ENCODE measurements at regions of chr3 and their contacts with region 1.

Region 1: DNA sequence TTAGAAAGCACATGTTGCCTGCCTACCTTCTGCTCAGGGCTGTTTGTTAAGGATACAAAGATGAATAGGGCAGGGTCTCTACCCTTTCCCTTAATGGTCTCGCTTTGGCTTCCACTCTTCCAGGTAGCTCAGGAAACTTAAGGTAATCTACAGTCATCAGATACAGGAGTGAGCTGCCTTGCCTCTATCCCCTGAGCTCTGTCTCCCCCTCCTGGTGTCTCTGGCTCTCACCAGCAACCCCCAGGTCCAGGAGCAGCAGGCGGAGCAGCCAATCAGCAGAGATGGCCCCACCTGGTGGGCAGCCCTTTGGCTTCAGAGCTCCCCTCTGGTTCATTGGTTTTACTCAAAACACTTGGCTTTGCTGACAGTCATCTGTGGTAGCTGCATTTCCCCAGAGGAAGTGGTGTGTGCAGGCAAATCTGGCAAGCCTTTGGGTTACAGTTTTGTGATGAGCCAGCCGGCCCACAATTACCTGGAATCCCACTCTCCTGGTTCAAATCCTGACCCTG is 8.5 kb upstream of the CX3CR1 start:
- DNase-seq: peak; percentile 88

Region 2: DNA sequence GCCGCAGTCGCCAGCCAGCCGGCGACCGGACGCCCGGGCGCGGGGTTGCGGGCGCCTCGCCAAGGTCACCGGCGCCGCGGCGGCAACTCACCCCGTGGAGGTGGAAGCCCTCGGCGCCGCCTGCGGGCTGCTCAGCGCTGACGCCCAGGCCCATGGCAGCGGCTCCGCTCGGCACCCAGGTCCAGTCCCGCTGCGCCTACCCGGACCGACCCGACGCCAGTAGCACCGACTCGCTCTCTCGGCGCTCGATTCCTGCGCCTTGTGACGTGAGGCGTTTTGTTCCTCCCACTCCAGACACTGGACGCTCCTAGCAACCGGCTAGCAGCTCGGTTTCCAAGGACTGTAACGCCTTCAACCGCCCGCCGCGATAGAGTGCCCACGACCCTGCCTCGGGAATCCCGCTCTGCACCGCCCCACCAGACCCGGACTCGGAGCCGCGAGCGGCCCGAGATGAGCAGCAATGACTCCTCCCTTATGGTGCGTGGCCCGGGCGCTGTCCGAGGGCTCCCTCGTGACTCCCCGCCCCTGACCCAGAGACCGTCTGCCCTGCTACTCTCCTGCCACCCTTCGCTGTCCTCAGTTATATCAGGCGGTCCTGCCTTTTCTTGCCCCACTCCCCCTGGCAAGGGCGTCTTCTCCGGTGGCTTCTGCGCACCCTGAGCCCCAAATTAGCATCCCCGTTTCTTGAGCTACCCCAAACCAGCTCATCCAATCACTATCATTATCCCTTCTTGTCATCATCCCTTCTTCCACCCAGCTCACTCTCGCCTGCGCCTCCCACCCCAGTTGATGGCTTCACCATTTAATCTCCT is 180.8 kb before region 1 on chr3 and contains the starts of genes GORASP1 and TTC21A:
- in situ Hi-C with region 1: loop called (anchors 25 kb)
- DNase-seq: peak; percentile 91
- total RNA-seq, gene GORASP1: 56.8 and 58.2 TPM in 2 replicates
- total RNA-seq, gene TTC21A: 0.95 and 1.7 TPM in 2 replicates